CD4-positive, alpha-beta memory T cell (primary cell): ENCODE measurements at regions of chr4 and their contacts with region 1.

Region 1: DNA sequence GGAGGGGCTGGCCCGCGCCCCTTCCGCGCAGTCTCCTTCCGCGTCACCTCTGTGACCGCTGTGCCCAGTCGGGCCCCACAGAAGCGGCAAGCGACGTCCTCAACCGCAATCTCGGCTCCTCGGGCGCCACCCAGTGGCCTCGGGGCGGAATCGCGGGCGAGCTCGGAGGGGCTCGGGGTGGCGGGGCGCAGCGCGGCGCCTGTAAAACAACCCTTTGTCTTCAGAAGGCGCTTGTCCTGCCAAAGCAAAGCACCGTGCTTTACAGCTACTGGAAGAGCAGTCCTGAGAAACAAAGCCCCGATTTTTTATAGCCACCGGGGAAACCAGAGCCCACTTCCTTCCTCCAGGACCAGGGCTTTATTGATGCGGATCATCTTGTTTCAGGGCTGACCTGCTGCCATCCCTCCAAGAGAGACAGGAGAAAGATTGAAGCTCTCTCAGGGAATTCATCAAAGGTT is 37.3 kb upstream of the CDKN2AIP start:
- DNase-seq: peak; percentile 86 to 92 (median 87)
- H3K4me3 ChIP-seq: peak overlapping the region; percentile 62 to 73
- H3K4me3 Mint-ChIP-seq: peak overlapping the region; percentile 77 to 93 (median 84)
- H3K27ac ChIP-seq: peak overlapping the region; percentile 49
- H3K27ac Mint-ChIP-seq: peak overlapping the region; percentile 75 to 95 (median 88)
- H3K4me1 ChIP-seq: no peaks in the 10 kb centered on the region
- H3K4me1 Mint-ChIP-seq: peaks cover 5 to 19% (median 11%) of the 10 kb centered on the region in 4 donors
- H3K27me3 ChIP-seq: no peaks in the 10 kb centered on the region
- H3K27me3 Mint-ChIP-seq: no peaks in the 10 kb centered on the region

Region 2: DNA sequence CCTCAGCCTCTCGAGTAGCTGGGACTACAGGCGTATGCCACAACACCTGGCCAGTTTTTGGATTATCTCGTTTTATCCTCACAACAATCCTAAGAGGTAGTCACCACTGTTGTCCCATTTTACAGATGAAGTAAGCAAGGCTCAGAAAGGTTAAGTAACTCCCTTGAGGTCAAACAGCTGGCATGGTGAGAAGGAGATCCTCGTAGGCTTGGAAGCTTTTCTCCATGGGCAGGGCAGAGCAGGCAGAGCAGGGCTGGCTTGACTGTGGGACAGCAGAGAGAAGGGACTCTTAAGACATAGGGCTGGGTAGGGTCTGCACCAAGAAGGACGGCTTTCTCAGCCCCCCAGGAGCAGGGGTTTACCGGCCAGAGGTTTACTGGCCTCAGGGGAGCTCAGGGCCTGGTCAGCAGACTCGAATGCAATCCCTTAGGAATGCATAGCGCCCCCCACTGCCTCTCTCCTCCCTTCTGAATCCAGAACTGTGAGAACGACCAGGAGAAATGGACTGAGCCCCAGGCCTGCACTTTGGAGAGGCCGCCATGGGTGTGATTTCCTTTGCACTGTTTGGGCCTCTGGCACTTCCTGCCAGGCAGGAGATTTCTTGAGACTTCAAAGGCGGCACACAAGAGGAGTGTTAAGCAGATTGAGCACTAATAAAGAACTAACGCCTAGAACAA is 23.3 kb after region 1 on chr4:
- CTCF ChIA-PET with region 1: interaction called, 21 read pairs
- POLR2A ChIA-PET with region 1: interaction called, 5 read pairs
- intact Hi-C with region 1: loop called (anchors 1 kb)
- DNase-seq: peak; percentile 32 to 51 (median 35)
- H3K4me3 ChIP-seq: no peak overlapping the region
- H3K4me3 Mint-ChIP-seq: peak overlapping the region; percentile 6 to 88 (median 68)
- H3K27ac ChIP-seq: peak overlapping the region; percentile 13
- H3K27ac Mint-ChIP-seq: peak overlapping the region; percentile 63 to 94 (median 88)
- H3K4me1 ChIP-seq: peaks cover 37% of the 10 kb centered on the region
- H3K4me1 Mint-ChIP-seq: peaks cover 20 to 50% (median 39%) of the 10 kb centered on the region in 4 donors
- H3K27me3 ChIP-seq: no peaks in the 10 kb centered on the region
- H3K27me3 Mint-ChIP-seq: no peaks in the 10 kb centered on the region

Region 3: DNA sequence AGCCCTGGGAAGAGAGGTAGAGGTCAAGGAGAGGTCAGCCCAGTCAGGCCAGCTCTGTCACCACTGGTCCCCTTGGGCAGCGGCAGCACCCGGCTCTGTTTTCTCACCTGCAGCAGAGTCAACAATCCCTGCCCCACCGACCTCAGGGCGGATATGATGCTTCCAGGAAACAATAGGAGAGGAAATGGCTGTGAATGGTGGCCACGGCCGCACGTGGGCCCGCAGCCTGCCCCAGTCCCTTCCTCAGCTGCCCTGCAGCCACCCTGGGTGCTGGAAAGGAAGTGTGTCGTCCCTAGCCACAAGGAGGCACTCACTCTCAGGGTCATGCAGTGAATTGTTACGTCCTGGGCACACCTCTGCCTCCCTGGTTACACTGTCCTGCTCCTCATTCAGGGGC is 903.0 kb after region 1 on chr4:
- CTCF ChIA-PET with region 1: no interaction called
- POLR2A ChIA-PET with region 1: no interaction called
- intact Hi-C with region 1: no loop called
- DNase-seq: peak; percentile 46 to 61 (median 48)
- H3K4me3 ChIP-seq: no peak overlapping the region
- H3K4me3 Mint-ChIP-seq: peak overlapping the region in 7 of 8 donors; percentile 27 to 63 (median 53)
- H3K27ac ChIP-seq: no peak overlapping the region
- H3K27ac Mint-ChIP-seq: peak overlapping the region; percentile 17 to 94 (median 71)
- H3K4me1 ChIP-seq: peaks cover 15% of the 10 kb centered on the region
- H3K4me1 Mint-ChIP-seq: peaks cover 18 to 29% (median 24%) of the 10 kb centered on the region in 4 donors
- H3K27me3 ChIP-seq: no peaks in the 10 kb centered on the region
- H3K27me3 Mint-ChIP-seq: no peaks in the 10 kb centered on the region